ENCODE measurements at regions of chr1 and their contacts with region 1.

Region 1: DNA sequence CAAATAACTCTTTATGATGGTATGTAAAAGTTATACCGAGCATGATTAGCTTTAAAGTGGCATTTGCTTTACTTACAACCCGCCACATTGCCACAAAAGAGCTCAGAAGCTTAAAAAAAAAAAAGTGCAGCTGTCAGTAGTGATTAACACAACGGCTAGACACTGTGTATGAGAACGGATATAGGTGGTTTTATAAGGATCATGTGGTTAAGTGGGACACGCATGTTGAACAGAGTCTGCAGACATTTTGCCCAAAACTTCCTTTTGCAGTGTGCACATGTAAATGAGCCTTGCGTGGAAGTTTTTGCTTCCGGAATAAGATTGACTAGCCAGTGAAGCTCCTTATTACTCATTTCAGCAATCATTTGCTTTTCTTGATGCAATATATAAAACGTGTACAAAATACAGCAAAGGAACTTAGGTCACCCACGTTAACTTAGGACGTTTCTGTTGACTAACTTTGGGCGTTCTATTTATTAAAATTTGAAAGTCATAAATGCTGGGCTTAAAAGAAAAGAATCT is 58.7 kb upstream of the RGS1 start:
- DNase-seq: peak; percentile 23
- ATAC-seq: peak; percentile 96
- H3K4me3 Mint-ChIP-seq: peak overlapping the region; percentile 75
- H3K27ac Mint-ChIP-seq: peak overlapping the region; percentile 65
- H3K4me1 Mint-ChIP-seq: peaks cover 59% of the 10 kb centered on the region
- H3K27me3 Mint-ChIP-seq: no peaks in the 10 kb centered on the region
- CTCF ChIP-seq: no peak

Region 2: GRCh38 chr1:192445848-192446489 is 70.9 kb before region 1 on chr1:
- CTCF ChIA-PET with region 1: no interaction called
- POLR2A ChIA-PET with region 1: no interaction called
- intact Hi-C with region 1: no loop called
- DNase-seq: no peak
- ATAC-seq: no peak
- H3K4me3 Mint-ChIP-seq: no peak overlapping the region
- H3K27ac Mint-ChIP-seq: no peak overlapping the region
- H3K4me1 Mint-ChIP-seq: no peaks in the 10 kb centered on the region
- H3K27me3 Mint-ChIP-seq: peaks cover 19% of the 10 kb centered on the region
- CTCF ChIP-seq: peak; percentile 87

Region 3: GRCh38 chr1:192506741-192507155 is 10.1 kb before region 1 on chr1:
- CTCF ChIA-PET with region 1: interaction called, 10 read pairs
- POLR2A ChIA-PET with region 1: interaction called, 5 read pairs
- intact Hi-C with region 1: loop called (anchors 1 kb)
- DNase-seq: no peak
- ATAC-seq: peak; percentile 79
- H3K4me3 Mint-ChIP-seq: no peak overlapping the region
- H3K27ac Mint-ChIP-seq: no peak overlapping the region
- H3K4me1 Mint-ChIP-seq: peaks cover 5% of the 10 kb centered on the region
- H3K27me3 Mint-ChIP-seq: peaks cover 8% of the 10 kb centered on the region
- CTCF ChIP-seq: no peak

Region 4: DNA sequence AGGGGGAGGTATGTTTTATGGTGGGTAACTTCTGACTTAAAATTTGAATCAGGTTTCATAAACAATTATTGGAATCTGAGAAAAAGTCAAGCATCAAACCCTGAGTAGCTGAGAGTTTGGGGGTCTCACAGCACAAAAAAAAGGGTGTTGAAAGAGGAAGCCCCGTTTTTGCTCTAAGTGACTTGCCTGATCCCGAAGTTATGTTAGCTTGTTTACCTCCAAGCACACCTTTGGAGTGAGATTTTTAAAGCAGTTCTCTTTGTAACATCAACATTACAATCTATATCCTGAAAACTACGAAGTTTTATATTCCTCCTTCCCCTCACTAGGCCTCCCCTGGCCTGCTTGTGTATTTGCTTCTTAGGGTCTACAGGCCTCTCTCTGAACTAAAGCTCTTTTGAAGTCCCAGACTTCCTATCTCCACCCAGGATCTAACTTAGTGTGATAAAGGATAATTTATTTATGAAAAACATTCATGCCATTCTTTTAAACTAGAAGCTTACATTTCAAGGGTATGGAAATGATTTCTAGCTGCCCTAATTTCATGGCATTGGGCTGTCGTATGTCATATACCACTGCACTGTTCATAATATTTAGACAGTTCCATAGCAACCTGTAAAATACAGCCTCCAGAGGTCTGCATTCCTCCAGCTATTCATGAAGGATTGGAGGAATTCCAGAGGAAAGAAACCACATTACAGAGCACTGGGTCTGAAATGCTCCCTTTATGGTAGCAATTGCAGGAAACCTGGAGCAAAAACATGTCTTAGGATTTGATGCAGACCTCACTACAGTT is 22.7 kb after region 1 on chr1:
- CTCF ChIA-PET with region 1: interaction called, 5 read pairs
- POLR2A ChIA-PET with region 1: interaction called, 46 read pairs
- intact Hi-C with region 1: loop called (anchors 1 kb)
- DNase-seq: no peak
- ATAC-seq: peak; percentile 25
- H3K4me3 Mint-ChIP-seq: peak overlapping the region; percentile 69
- H3K27ac Mint-ChIP-seq: peak overlapping the region; percentile 86
- H3K4me1 Mint-ChIP-seq: peaks cover 61% of the 10 kb centered on the region
- H3K27me3 Mint-ChIP-seq: no peaks in the 10 kb centered on the region
- CTCF ChIP-seq: no peak

Region 5: DNA sequence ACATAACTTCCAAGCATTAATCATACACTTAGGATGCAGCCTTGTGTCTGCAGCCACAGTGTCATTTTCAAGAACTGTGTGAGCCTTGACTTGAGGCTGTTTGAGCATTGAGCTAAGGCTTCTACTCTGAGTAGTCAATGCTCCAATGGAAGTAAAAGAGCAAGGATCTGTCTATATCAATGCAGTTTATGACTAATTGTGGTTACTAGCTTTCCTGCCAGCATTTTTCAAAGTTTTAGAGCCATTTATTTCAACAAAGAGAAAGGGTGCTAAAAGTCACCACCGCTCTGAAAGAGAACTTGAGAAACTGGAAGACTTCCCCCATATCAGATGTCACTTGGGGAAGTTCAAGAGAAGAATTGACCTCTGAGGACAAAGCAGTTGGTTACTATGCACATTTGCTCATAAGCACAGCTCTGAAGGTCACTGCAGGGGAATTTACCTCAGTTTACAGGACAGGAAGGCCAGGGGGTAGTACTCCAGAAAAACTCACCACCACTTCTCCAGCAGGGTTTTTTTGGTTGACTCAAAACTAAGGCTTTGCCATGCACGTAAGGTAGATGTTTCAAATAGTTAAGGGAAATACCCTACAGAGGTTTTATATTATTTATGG is 34.2 kb after region 1 on chr1:
- CTCF ChIA-PET with region 1: interaction called, 8 read pairs
- POLR2A ChIA-PET with region 1: interaction called, 46 read pairs
- intact Hi-C with region 1: loop called (anchors 1 kb)
- DNase-seq: no peak
- ATAC-seq: peak; percentile 38
- H3K4me3 Mint-ChIP-seq: peak overlapping the region; percentile 39
- H3K27ac Mint-ChIP-seq: peak overlapping the region; percentile 69
- H3K4me1 Mint-ChIP-seq: peaks cover 63% of the 10 kb centered on the region
- H3K27me3 Mint-ChIP-seq: no peaks in the 10 kb centered on the region
- CTCF ChIP-seq: no peak

Region 6: DNA sequence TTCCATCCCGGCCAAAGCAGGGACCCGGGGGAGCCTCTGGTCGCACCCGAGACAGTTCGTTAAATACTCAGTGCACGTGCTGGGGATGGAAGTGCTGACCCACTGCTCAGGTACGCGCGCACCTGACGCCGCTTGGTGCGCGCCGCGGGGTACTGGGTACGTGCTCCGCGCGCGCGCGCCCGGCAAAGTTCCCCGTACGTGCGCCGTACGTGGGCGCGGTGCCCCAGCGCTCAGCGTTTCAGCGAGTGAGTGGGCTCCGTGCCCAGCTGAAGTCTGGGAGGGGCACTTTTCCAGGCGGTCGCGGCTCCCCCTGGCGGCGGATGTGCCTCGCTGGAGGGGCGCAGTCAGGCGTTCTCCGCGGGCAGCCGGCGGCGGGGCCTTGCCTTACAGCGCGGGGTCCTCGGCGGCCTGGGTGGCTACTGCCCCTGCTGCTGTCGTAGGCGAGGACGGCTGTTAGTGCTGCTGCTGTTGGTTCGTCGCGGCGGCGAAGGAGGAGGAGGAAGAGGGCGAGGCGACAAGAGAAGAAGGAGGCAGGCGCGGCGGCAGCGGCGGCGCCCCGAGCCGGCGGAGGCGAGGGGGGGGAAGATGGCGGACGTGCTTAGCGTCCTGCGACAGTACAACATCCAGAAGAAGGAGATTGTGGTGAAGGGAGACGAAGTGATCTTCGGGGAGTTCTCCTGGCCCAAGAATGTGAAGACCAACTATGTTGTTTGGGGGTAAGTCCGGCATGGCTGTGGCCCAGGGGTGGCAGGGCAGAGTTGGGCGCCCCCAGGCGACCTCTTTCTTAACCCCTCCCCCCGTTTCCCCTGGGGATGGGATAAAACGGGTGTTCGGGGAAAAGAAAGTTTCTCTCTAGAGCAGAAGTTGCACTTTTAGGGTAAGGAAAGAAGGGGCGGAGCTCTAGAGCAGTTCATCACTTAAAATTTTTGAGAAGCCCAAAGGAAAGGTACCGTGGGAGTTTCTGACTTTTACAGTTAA is 605.1 kb after region 1 on chr1 and contains the start of gene CDC73:
- CTCF ChIA-PET with region 1: no interaction called
- POLR2A ChIA-PET with region 1: interaction called, 5 read pairs
- intact Hi-C with region 1: loop called (anchors 1 kb)
- DNase-seq: peak; percentile 99
- ATAC-seq: peak; percentile 90
- H3K4me3 Mint-ChIP-seq: peak within 1 kb of the TSS; percentile 93
- H3K27ac Mint-ChIP-seq: peak within 1 kb of the TSS; percentile 94
- H3K4me1 Mint-ChIP-seq: peaks cover 43% of the 10 kb centered on the region
- H3K27me3 Mint-ChIP-seq: no peaks in the 10 kb centered on the region
- CTCF ChIP-seq: peak; percentile 17
- total RNA-seq, gene CDC73: 55.9 and 59.1 TPM in 2 replicates